ENCODE measurements at regions of chr5 and their contacts with region 1.

Region 1: GRCh38 chr5:54254482-54255198 is 55.7 kb downstream of the ARL15 start:
- DNase-seq: peak; percentile 14
- H3K4me3 Mint-ChIP-seq: no peak overlapping the region
- H3K27ac Mint-ChIP-seq: no peak overlapping the region
- H3K4me1 Mint-ChIP-seq: no peaks in the 10 kb centered on the region
- H3K27me3 Mint-ChIP-seq: no peaks in the 10 kb centered on the region
- CTCF ChIP-seq: no peak

Region 2: DNA sequence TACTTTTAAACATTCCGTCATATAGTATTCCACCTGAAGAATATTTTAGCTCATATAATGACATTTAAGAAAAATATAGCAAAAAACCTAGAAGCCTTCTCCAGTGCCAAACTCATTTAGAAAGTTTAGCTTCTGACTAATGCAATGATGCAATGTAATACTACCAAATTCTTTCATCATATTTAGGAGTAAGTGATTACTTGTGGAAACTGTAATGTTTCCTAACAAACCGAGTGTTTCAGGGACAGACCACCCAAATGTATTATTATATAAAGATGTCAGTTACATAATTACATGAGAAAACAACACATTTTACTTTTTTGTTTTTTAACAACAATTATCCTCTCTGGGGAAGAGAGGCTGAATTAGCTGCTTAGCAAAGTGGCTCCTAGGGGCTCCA is 260.5 kb before region 1 on chr5:
- CTCF ChIA-PET with region 1: no interaction called
- POLR2A ChIA-PET with region 1: no interaction called
- intact Hi-C with region 1: no loop called
- DNase-seq: peak; percentile 56
- H3K4me3 Mint-ChIP-seq: no peak overlapping the region
- H3K27ac Mint-ChIP-seq: no peak overlapping the region
- H3K4me1 Mint-ChIP-seq: peaks cover 7% of the 10 kb centered on the region
- H3K27me3 Mint-ChIP-seq: no peaks in the 10 kb centered on the region
- CTCF ChIP-seq: no peak

Region 3: GRCh38 chr5:54234304-54234933 is 20.2 kb before region 1 on chr5:
- CTCF ChIA-PET with region 1: interaction called, 10 read pairs
- POLR2A ChIA-PET with region 1: no interaction called
- intact Hi-C with region 1: no loop called
- DNase-seq: peak; percentile 36
- H3K4me3 Mint-ChIP-seq: no peak overlapping the region
- H3K27ac Mint-ChIP-seq: no peak overlapping the region
- H3K4me1 Mint-ChIP-seq: peaks cover under 1% of the 10 kb centered on the region
- H3K27me3 Mint-ChIP-seq: no peaks in the 10 kb centered on the region
- CTCF ChIP-seq: peak; percentile 52